MCF 10A (cell line): ENCODE measurements at regions of chr10 and their contacts with region 1.

Region 1: GRCh38 chr10:109978481-109978880 is 29.3 kb upstream of the ADD3 start:
- DNase-seq: peak; percentile 61
- H3K4me3 Mint-ChIP-seq: no peak overlapping the region
- H3K27ac Mint-ChIP-seq: no peak overlapping the region
- H3K4me1 Mint-ChIP-seq: no peaks in the 10 kb centered on the region
- H3K27me3 Mint-ChIP-seq: no peaks in the 10 kb centered on the region
- CTCF ChIP-seq: peak; percentile 63

Region 2: GRCh38 chr10:109866168-109866994 is 112.1 kb before region 1 on chr10:
- CTCF ChIA-PET with region 1: no interaction called
- POLR2A ChIA-PET with region 1: no interaction called
- intact Hi-C with region 1: no loop called
- DNase-seq: peak; percentile 22
- H3K4me3 Mint-ChIP-seq: no peak overlapping the region
- H3K27ac Mint-ChIP-seq: no peak overlapping the region
- H3K4me1 Mint-ChIP-seq: no peaks in the 10 kb centered on the region
- H3K27me3 Mint-ChIP-seq: no peaks in the 10 kb centered on the region
- CTCF ChIP-seq: peak; percentile 14

Region 3: DNA sequence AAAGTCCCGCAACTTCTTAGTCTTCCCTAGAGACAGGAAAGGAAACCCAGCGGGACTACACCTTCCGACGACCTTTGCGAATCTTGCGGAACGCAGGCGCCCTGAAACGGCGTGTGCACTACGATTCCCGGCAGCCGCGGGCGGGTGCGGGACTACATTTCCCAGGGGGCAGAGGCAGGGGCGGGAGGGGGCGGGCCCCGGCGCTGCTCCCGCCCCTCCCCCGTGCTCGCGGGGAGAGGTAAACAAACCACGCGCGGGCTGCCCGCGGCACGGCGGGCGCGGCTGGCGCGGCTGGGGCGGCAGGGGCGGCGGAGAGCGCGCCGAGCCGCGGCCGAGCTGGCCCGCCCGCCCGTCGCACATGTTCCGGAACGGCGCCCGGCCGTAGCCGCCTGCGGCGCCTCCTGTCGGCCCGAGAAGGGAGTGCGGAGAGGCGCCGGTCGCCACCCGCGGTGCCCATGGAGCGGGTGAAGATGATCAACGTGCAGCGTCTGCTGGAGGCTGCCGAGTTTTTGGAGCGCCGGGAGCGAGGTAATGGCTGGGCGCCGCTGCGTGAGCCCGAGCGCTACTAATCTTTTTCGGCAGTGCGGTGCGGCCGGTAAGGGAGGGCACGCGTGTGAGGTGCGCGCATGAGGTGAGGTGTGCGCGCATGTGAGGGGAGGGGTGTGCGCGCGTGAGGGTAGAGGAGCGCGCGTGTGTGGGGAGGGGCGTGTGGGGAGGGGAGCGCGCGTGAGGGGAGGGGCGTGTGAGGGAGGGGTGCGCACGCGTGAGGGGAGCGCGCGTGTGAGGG is 247.5 kb after region 1 on chr10:
- CTCF ChIA-PET with region 1: no interaction called
- POLR2A ChIA-PET with region 1: no interaction called
- intact Hi-C with region 1: loop called (anchors 1 kb)
- DNase-seq: peak; percentile 92
- H3K4me3 Mint-ChIP-seq: peak overlapping the region; percentile 81
- H3K27ac Mint-ChIP-seq: peak overlapping the region; percentile 67
- H3K4me1 Mint-ChIP-seq: peaks cover 33% of the 10 kb centered on the region
- H3K27me3 Mint-ChIP-seq: no peaks in the 10 kb centered on the region
- CTCF ChIP-seq: peak; percentile 63